ENCODE measurements at regions of chr20 and their contacts with region 1.

Region 1: GRCh38 chr20:47501483-47502270 is at the start of gene NCOA3:
- DNase-seq: peak; percentile 89 to 99 (median 96)
- ATAC-seq: peak; percentile 99
- H3K4me3 ChIP-seq: peak within 1 kb of the TSS; percentile 84 to 93
- H3K27ac ChIP-seq: peak within 1 kb of the TSS; percentile 91 to 94
- H3K4me1 ChIP-seq: peaks cover 0 to 41% of the 10 kb centered on the region in 2 donors
- H3K27me3 ChIP-seq: no peaks in the 10 kb centered on the region
- CTCF ChIP-seq: peak; percentile 44 to 78
- polyA plus RNA-seq, gene NCOA3: 35.1 to 41.5 (median 38.2) TPM

Region 2: GRCh38 chr20:47113362-47114109 is 388.1 kb before region 1 on chr20:
- intact Hi-C with region 1: no loop called
- DNase-seq: no peak
- ATAC-seq: peak; percentile 24
- H3K4me3 ChIP-seq: no peak overlapping the region
- H3K27ac ChIP-seq: no peak overlapping the region
- H3K4me1 ChIP-seq: peaks cover 0 to 3% of the 10 kb centered on the region in 2 donors
- H3K27me3 ChIP-seq: peaks cover 0 to 24% of the 10 kb centered on the region in 2 donors
- CTCF ChIP-seq: no peak

Region 3: GRCh38 chr20:47606983-47607613 is 105.4 kb after region 1 on chr20:
- intact Hi-C with region 1: loop called in 1 of 2 experiments (anchors 10 kb)
- DNase-seq: no peak
- ATAC-seq: peak; percentile 41
- H3K4me3 ChIP-seq: no peak overlapping the region
- H3K27ac ChIP-seq: peak overlapping the region; percentile 17 to 38
- H3K4me1 ChIP-seq: peaks cover 6 to 39% of the 10 kb centered on the region in 2 donors
- H3K27me3 ChIP-seq: no peaks in the 10 kb centered on the region
- CTCF ChIP-seq: no peak